Mammary epithelial cell (primary cell): ENCODE measurements at regions of chr2 and their contacts with region 1.

Region 1: GRCh38 chr2:65539633-65540032 is 107.2 kb upstream of the SPRED2 start:
- DNase-seq: no peak
- H3K4me3 ChIP-seq: no peak overlapping the region
- H3K27ac ChIP-seq: no peak overlapping the region
- H3K4me1 ChIP-seq: peaks cover 18% of the 10 kb centered on the region
- H3K27me3 ChIP-seq: no peaks in the 10 kb centered on the region
- CTCF ChIP-seq: no peak

Region 2: DNA sequence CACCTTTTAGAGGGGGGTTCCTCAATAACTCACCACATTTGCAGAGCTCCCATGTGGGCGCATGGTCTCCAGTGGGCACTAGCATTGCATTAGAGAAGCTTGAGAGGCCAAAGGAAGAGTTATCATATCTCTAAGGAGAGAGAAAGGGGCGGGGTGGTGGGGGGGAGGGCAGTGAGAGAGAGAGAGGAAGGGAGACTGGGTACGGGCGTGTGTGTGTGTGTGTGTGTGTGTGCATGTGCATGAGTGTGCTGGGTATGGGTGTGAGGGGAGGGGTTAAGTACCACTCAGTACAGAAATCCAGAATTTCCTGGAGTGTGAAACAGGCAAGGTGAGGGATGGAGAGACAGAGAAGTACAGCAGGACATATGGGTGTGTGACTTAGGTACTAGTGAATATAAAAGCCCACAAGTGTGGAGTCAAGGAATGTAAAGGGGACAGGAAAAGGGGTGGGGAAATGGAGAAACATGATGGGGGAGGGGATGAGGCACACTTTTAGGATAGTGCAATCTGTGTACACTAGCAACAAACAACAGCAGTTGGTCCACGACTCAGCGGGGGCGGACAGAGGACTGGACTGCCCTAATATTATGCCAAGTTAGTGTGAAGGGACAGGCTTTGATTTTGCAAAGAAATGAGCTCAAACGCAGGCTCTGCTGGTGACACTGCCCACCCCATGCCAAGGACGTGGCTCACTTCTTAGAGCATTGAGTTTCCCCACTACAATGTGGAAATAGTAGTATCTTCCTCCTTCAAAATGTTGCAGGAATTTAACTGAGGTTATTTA is 198.5 kb before region 1 on chr2:
- CTCF ChIA-PET with region 1: no interaction called
- dilution Hi-C with region 1: loop called (anchors 5 kb)
- in situ Hi-C with region 1: no loop called
- intact Hi-C with region 1: no loop called
- DNase-seq: no peak
- H3K4me3 ChIP-seq: no peak overlapping the region
- H3K27ac ChIP-seq: no peak overlapping the region
- H3K4me1 ChIP-seq: no peaks in the 10 kb centered on the region
- H3K27me3 ChIP-seq: no peaks in the 10 kb centered on the region
- CTCF ChIP-seq: no peak

Region 3: DNA sequence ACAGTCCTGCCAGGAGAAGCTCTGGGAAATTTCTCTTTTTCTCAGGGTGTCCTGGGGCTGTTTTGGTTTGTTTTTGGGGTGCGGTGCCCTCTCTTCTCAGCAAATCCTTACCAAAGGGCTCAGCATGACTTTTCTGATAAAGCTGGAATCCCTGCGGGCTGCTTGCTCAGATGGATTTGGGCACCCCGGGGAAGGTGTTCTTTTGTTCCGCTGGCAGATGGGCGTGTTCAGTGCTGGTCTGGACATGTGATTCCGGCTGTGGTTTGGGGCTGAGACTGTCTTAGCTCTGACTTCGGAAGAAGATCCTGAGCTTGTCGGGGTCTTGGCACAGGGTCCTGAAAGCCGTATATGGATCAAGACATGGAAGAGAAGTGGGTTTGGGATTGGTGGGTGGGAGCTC is 27.0 kb after region 1 on chr2:
- CTCF ChIA-PET with region 1: no interaction called
- dilution Hi-C with region 1: no loop called
- in situ Hi-C with region 1: no loop called
- intact Hi-C with region 1: no loop called
- DNase-seq: peak; percentile 88
- H3K4me3 ChIP-seq: peak overlapping the region; percentile 43 to 67 (median 49)
- H3K27ac ChIP-seq: peak overlapping the region; percentile 96
- H3K4me1 ChIP-seq: peaks cover 19% of the 10 kb centered on the region
- H3K27me3 ChIP-seq: no peaks in the 10 kb centered on the region
- CTCF ChIP-seq: no peak